Activated T-helper 1 cell treated with anti-CD3 and anti-CD28 coated beads, Interleukin-12 subunit alpha, Interleukin-12 subunit beta, Interleukin-2, Interleukin-4 antibody, amounts not matched to agents 30 ng/mL and 10 ng/mL and 1 ng/mL, durations not matched to agents 14 hours and 24 hours and 36 hours (primary cell): ENCODE measurements at regions of chr6 and their contacts with region 1.

Region 1: GRCh38 chr6:21826023-21826422 is 232.5 kb downstream of the SOX4 start:
- DNase-seq: no peak
- H3K4me3 Mint-ChIP-seq: no peak overlapping the region
- H3K27ac Mint-ChIP-seq: no peak overlapping the region
- H3K4me1 Mint-ChIP-seq: peaks cover 9% of the 10 kb centered on the region
- H3K27me3 Mint-ChIP-seq: no peaks in the 10 kb centered on the region

Region 2: DNA sequence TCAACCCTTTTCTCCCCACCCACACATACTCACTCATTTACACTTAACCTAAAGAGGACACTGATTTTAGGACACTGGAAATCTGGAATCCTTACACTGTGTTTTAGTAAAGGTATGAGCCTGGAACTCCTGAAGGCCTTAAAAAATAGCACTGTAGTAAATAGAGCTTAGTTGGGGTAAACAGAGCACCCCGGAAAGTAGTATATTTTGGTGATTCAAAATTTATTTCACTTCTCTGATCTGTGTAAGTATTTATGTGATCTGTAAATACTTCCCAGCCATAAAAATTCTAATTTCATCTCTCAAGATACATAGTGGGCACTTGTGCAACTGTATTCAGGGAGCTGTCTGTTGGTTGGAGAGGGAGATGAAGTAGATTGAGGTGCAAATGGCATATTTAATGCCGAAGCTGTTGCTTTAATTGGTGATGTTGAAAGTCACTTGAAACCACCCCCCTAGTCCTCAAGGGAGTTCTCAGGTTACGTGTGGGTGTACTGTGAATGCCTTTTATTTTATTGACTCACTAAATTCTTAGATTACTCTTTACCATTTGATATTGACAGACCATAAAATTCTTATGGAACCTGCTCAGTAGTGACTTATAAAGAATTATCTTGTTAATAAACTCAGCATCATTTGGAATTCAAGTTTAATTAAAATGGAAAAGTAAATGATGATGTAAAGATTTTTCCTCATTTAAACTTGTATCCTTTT is 77.5 kb before region 1 on chr6:
- intact Hi-C with region 1: loop called (anchors 5 kb)
- DNase-seq: no peak
- H3K4me3 Mint-ChIP-seq: no peak overlapping the region
- H3K27ac Mint-ChIP-seq: no peak overlapping the region
- H3K4me1 Mint-ChIP-seq: peaks cover 8% of the 10 kb centered on the region
- H3K27me3 Mint-ChIP-seq: peaks cover 3% of the 10 kb centered on the region

Region 3: DNA sequence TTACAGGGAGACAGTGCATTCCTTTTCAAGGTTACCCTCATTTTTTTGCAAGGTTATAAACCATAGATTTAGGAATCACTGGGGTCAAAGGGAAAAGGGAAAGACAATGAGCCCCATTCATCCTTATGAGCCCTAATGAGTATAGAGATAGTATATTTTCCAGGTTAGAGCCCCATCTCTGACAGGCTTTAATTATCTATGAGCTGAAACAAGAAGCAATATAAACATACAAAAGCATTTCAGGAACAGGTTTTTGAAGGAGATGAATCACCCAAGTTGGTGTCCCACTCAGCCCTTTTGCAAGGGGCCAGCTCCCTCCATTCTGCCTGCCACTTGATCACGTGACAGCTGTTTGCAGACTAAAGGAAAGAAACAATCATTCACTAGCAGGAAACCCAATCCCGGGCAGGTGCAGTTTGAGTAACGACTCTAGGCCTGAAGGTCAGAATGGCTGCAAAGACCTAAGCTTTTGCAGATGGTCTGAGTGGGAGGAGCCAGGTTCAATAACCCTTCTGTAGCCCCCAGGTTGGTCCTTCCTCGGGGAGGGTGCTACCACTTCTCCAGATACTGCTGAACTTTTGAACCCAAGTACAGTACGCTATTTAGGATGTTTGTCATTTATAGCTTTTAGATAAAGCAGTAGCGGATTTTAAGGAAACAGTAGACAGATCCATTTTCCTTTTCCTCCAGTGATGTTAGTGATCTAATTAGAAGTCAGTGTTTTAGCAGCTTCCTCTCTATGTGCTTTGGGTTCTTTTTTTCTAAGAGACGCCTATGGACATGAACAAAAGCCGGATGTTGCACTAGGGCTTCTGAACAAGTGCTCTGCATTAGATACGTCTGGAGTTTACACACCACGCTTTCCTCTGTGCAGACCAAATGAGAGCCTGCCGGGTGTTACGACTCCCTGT is 20.8 kb after region 1 on chr6:
- intact Hi-C with region 1: loop called (anchors 2 kb)
- DNase-seq: no peak
- H3K4me3 Mint-ChIP-seq: no peak overlapping the region
- H3K27ac Mint-ChIP-seq: peak overlapping the region; percentile 13
- H3K4me1 Mint-ChIP-seq: peaks cover 21% of the 10 kb centered on the region
- H3K27me3 Mint-ChIP-seq: no peaks in the 10 kb centered on the region